Right ventricle myocardium inferior (tissue), 1 donor: ENCODE measurements at regions of chr9 and their contacts with region 1.

Region 1: DNA sequence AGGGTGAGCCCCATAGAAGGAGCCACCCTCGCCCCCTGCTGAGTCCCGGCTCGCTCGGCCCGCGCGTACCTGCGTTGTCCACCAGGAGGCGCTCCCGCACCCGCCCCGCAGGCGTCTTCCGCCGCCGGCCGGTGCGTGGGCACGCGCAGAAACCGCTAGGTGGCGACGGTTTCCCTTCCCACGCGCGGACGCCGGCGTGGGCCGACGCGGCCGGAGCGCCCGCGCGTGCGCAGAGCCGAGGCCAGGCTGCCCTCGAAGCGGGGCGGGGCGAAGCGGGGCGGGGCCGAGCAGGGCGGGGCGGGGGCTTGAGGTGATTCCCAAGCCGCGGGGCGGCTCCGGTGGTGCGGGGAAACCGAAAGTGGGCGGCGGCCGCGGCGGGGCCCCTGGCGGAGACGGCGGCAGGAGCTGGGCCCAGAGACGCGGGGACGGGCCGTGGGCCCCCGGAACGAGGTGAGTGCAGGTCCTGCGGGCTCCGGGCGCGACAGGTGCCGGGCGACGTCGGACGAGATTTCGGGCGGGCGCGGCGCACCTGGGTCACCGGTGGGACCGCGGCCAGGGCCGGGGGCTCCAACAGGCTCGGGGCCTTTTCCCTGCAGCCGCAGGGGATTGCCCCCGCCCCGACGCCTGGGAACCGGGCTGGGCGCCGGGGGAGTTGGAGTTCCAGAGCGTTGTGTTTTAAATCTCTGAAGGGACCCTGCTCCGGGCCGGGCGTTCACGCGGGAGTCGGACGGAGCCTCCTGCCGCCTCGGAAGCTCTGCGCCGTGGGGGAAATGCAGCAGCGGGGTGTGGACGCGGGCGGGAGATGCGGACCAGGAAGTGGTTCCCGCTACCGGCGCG is at the start of gene TDRD7:
- DNase-seq: peak; percentile 94
- ATAC-seq: peak; percentile 96
- total RNA-seq, gene TDRD7: 8.7 TPM

Region 2: DNA sequence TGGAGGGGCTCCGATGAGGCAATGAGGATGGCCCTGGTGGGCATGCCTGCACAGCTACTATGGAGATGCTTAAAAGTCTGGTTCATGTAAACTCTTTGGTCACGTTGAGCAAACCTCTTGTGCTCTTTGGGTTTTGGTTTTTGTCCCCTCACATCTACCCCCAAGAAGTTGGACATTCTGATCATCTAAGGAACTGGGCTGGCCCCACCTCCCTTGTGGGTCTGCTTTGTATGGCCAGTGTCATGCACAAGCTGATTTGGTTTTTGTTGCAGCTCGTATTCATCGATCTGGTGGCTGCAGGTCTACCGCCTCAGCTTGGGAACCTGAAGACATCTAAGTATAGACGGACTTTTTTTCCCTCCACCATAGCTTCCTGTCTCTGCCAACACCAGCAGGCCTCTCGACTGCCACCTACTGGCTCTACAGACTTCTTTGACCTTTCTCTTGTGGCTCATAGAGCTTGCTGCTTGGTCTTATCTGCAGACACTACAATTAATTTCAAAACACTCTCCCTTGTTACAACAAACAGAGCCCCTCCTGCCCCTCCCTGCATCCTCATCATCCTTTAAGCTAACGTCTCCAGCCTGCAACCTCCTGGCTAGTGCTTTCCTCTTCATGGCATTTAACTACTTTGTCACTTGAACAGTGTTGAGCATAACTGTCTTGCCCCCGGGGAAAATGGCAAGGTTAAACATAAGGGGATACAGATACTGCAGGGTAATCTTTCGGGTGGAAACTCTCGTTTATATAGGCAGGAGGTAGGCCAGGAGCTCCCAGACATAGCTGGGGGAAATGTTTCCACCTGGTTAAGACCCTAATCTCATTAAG is 186.7 kb after region 1 on chr9:
- intact Hi-C with region 1: no loop called
- DNase-seq: no peak
- ATAC-seq: peak; percentile 56

Region 3: DNA sequence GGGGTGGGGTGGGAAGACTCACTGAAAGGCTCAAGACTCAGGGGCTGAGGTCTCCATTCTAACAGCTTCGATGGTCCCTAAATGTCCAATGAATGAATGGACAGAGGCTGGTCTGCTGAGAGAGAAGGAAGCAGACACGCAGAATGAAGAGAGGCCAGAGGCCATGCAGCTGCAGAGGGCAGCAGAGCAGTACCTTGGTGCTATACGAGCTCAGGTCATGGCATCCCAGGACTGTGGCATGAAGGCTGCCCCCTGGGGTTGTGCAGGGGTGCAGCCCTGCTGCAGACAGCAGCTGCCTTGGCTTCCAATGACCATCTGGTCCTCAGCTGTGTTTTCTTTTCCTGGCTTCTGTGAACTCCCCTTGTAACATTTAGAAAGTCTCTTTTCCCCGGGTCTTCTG is 795.6 kb after region 1 on chr9:
- intact Hi-C with region 1: loop called (anchors 10 kb)
- DNase-seq: no peak
- ATAC-seq: no peak